ENCODE measurements at regions of chr11 and their contacts with region 1.

Region 1: DNA sequence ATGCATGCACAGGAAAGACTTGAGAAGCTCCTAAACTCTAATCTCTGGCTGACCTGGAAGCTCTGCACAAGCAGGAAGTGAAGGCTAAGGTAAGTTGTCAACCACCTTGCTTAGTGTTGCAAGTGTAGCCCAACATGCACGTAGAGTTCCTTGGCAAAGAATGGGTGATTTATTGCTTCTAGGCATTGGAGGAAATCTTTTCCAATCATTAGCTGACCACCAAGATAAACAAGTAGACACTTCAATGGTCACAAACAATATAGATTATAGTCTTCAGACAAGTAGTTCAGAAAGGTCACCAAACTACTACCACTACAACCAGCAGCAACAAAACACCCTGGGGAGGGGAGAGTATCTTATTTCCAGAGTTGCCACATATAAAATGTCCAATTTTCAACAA is 105.6 kb downstream of the STK33 start:
- DNase-seq: no peak
- H3K4me3 ChIP-seq: no peak overlapping the region
- H3K27ac ChIP-seq: no peak overlapping the region
- H3K4me1 ChIP-seq: no peaks in the 10 kb centered on the region
- H3K27me3 ChIP-seq: no peaks in the 10 kb centered on the region
- CTCF ChIP-seq: no peak
- EP300 ChIP-seq: no peak
- POLR2A ChIP-seq: no peak

Region 2: GRCh38 chr11:8545698-8546366 is 57.4 kb after region 1 on chr11:
- intact Hi-C with region 1: loop called (anchors 5 kb)
- DNase-seq: no peak
- H3K4me3 ChIP-seq: no peak overlapping the region
- H3K27ac ChIP-seq: no peak overlapping the region
- H3K4me1 ChIP-seq: peaks cover 0 to 8% (median 3%) of the 10 kb centered on the region in 4 donors
- H3K27me3 ChIP-seq: no peaks in the 10 kb centered on the region
- CTCF ChIP-seq: no peak
- EP300 ChIP-seq: no peak
- POLR2A ChIP-seq: no peak

Region 3: GRCh38 chr11:8765294-8765693 is 276.9 kb after region 1 on chr11:
- intact Hi-C with region 1: no loop called
- DNase-seq: no peak
- H3K4me3 ChIP-seq: no peak overlapping the region
- H3K27ac ChIP-seq: peak overlapping the region; percentile 70 to 97 (median 92)
- H3K4me1 ChIP-seq: peaks cover 3 to 99% (median 92%) of the 10 kb centered on the region in 4 donors
- H3K27me3 ChIP-seq: no peaks in the 10 kb centered on the region
- CTCF ChIP-seq: no peak
- EP300 ChIP-seq: no peak
- POLR2A ChIP-seq: no peak